ENCODE measurements at regions of chr1 and their contacts with region 1.

Region 1: GRCh38 chr1:17671741-17672140 is 83.4 kb upstream of the ACTL8 start:
- DNase-seq: peak in 1 of 2 experiments; percentile 61
- H3K4me3 ChIP-seq: no peak overlapping the region
- H3K27ac ChIP-seq: no peak overlapping the region
- H3K4me1 ChIP-seq: peaks cover 0 to 15% (median 7%) of the 10 kb centered on the region in 4 experiments; a peak in 5 of 7 replicates
- H3K27me3 ChIP-seq: no peaks in the 10 kb centered on the region
- CTCF ChIP-seq: peak in 2 of 3 experiments; percentile 9 to 30; a peak in 1 of 4 replicates
- EP300 ChIP-seq: no peak
- POLR2A ChIP-seq: no peak
- RAD21 ChIP-seq: no peak

Region 2: DNA sequence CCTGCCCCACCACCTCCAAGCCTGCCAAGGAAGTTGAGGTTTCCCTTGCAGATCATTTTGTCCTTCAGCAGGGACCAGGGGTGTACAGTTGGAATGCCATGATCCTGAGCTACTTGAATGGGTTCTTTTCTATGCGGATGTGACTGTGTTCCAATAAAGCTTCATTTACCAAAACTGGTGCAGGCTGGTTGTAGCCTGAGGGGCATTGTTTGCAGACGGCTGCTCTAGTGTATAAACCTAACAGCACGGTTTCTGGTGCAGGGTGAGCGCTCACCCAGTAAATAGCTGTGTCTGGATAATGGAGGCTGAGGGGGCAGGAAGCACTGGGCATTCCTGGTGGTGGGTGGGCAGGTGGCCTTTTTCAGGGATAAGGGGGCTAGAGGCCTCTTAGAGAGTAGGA is 10.7 kb after region 1 on chr1:
- CTCF ChIA-PET with region 1: interaction called, 10 read pairs
- POLR2A ChIA-PET with region 1: interaction called, 3 read pairs
- DNase-seq: no peak
- H3K4me3 ChIP-seq: no peak overlapping the region
- H3K27ac ChIP-seq: no peak overlapping the region
- H3K4me1 ChIP-seq: peaks cover 0 to 8% (median 5%) of the 10 kb centered on the region in 4 experiments; a peak in 5 of 7 replicates
- H3K27me3 ChIP-seq: no peaks in the 10 kb centered on the region
- CTCF ChIP-seq: no peak
- EP300 ChIP-seq: no peak
- POLR2A ChIP-seq: no peak
- RAD21 ChIP-seq: no peak